Heart left ventricle (tissue), 16 donors: ENCODE measurements at regions of chr14 and their contacts with region 1.

Region 1: DNA sequence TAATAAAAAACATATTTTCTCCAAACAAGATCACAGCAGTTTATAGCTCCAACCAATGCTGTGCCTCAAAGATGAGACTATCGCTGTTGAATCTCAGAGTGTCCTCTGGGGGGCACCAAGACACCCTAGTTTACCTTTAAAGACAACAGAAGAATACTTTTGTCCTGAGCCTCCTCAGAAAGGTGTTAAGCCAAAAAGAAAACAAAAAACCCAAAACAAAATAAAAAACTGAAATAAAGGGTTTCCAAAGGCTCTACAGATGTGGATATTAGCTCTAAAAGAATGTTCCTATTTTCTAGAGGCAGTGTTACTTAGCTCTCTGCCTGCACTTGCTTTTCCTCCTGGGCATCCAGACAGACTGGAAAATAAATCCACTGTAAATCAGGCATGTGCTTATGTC is 86.9 kb upstream of the TTC7B start:
- DNase-seq: peak in 4 of 5 donors; percentile 30 to 50 (median 40)
- ATAC-seq: peak; percentile 75 to 88 (median 82)
- H3K4me3 ChIP-seq: no peak overlapping the region
- H3K27ac ChIP-seq: no peak overlapping the region
- H3K4me1 ChIP-seq: no peaks in the 10 kb centered on the region
- H3K27me3 ChIP-seq: no peaks in the 10 kb centered on the region
- CTCF ChIP-seq: peak; percentile 54 to 82 (median 70)
- POLR2A ChIP-seq: no peak

Region 2: GRCh38 chr14:90295870-90296516 is 607.1 kb before region 1 on chr14:
- intact Hi-C with region 1: loop called in 4 of 10 experiments (anchors 10 kb)
- DNase-seq: no peak
- ATAC-seq: no peak
- H3K4me3 ChIP-seq: no peak overlapping the region
- H3K27ac ChIP-seq: peak overlapping the region in 1 of 12 donors; percentile 77
- H3K4me1 ChIP-seq: peaks cover 0 to 36% (median under 1%) of the 10 kb centered on the region in 12 donors
- H3K27me3 ChIP-seq: no peaks in the 10 kb centered on the region
- CTCF ChIP-seq: no peak
- POLR2A ChIP-seq: no peak

Region 3: DNA sequence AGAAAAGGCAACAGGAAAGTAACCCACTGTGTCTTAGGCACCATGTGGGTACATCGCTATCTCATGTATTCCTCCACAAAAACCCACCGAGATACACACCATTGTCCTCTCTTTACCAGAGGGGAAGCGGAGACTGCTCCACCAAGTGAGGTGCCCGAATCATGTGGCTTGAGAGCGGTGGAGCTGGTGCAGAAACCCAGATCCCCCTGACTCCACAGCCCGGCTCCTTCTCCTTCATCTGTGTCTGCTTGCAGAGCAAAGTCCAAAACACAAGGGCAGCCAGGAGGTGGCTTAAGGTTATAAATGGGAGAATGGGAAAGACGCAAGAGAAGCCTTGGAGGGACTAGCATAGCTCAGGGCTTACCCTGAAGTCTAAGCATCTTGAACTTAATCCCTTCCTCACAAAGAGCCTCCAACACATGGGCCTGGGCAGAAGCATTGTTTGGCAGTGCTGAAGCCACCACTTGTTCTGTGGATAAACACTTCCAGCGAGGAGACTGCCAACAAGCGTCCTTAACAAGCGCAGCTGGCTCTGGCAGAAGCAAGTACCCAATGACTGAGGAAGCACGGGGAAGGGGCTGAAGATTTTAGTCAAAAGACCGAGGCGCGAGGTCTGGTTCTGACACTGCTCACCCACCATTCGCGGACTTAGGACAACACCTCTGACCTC is 169.8 kb before region 1 on chr14:
- intact Hi-C with region 1: no loop called
- DNase-seq: peak in 1 of 5 donors; percentile 43
- ATAC-seq: peak; percentile 69 to 83 (median 80)
- H3K4me3 ChIP-seq: no peak overlapping the region
- H3K27ac ChIP-seq: peak overlapping the region in 1 of 12 donors; percentile 2
- H3K4me1 ChIP-seq: peaks cover 0 to 20% (median 0%) of the 10 kb centered on the region in 12 donors
- H3K27me3 ChIP-seq: no peaks in the 10 kb centered on the region
- CTCF ChIP-seq: no peak
- POLR2A ChIP-seq: no peak

Region 4: DNA sequence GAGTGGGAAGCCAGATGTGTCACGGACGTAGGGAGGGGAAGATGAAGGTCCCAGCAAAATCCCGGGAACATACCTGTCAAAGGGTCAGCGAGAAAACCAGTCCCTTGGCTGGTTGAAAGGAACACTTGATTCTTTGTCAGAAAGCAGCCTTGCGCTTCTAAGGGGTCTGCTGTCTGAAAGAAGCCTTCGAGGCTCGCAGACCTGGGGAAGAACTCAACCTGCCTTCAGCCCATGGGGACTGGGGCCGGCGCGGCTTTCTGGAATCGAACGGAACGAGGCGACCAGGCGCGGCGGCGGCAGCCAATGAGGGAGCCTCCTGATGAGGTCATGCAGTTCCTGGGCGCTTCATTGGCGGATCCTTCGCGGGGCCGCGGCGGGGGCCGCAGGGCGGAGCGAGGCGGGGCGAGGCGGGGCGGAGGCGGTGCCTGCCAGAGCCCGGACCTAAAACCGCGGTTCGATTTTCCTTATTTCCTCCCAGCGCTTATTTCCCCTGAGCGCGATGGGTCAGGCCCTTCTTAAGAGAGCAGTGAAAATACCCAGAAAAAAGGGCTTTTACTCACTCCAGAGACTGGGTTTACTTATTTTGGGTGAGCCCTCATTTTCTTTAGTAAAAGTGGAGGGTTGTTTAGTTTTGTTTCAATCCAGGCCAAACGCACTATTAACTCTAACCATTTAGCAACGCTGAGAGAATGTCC is 75.0 kb before region 1 on chr14:
- intact Hi-C with region 1: loop called in 1 of 10 experiments (anchors 2 kb)
- DNase-seq: peak; percentile 95 to 97 (median 96)
- ATAC-seq: peak; percentile 98 to 100 (median 99)
- H3K4me3 ChIP-seq: peak overlapping the region in 11 of 12 donors; percentile 3 to 57 (median 47)
- H3K27ac ChIP-seq: peak overlapping the region; percentile 1 to 95 (median 77)
- H3K4me1 ChIP-seq: peaks cover 0 to 17% (median 14%) of the 10 kb centered on the region in 12 donors
- H3K27me3 ChIP-seq: no peaks in the 10 kb centered on the region
- CTCF ChIP-seq: no peak
- POLR2A ChIP-seq: peak in 1 of 2 donors; percentile 47

Region 5: DNA sequence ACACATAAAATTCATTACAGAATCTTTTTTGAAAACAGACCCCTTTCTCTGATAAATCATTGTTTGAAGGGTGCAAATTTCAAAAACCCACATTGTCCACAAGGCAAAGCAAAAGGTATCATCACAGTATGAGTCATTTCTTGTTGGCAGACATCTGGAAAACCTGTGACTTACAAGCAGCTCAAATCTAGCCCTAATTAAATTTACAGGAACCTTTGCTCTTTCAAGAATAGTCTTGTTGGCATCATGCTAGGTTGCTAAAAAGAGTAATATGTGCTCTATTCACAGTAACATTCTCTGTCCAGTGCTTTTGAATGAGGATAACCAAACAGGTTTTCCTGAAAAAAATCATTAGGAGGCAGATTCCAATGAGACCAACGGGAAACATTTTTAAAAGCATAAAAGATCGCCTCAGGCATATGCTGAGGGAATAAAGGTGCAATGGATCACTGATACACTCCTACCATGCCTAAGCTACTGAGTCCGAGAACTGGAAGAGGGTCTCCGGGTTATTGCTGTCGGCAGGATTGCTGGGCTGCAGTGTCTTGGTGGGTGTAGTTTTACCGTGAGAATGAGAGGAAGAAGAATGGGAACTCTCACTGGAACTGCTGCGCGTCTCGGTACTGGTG is 31.4 kb before region 1 on chr14:
- intact Hi-C with region 1: no loop called
- DNase-seq: no peak
- ATAC-seq: peak in 3 of 4 donors; percentile 20 to 72 (median 47)
- H3K4me3 ChIP-seq: no peak overlapping the region
- H3K27ac ChIP-seq: peak overlapping the region in 3 of 12 donors; percentile 4 to 50 (median 45)
- H3K4me1 ChIP-seq: peaks cover 0 to 41% (median 10%) of the 10 kb centered on the region in 12 donors
- H3K27me3 ChIP-seq: no peaks in the 10 kb centered on the region
- CTCF ChIP-seq: no peak
- POLR2A ChIP-seq: no peak

Region 6: GRCh38 chr14:91047174-91047753 is 144.2 kb after region 1 on chr14:
- intact Hi-C with region 1: loop called in 1 of 10 experiments (anchors 10 kb)
- DNase-seq: no peak
- ATAC-seq: no peak
- H3K4me3 ChIP-seq: no peak overlapping the region
- H3K27ac ChIP-seq: no peak overlapping the region
- H3K4me1 ChIP-seq: peaks cover 0 to 5% (median 0%) of the 10 kb centered on the region in 12 donors
- H3K27me3 ChIP-seq: no peaks in the 10 kb centered on the region
- CTCF ChIP-seq: no peak
- POLR2A ChIP-seq: no peak

Region 7: GRCh38 chr14:91060351-91061055 is 157.4 kb after region 1 on chr14 and contains the start of gene RPS6KA5:
- intact Hi-C with region 1: loop called in 2 of 10 experiments (anchors 5 to 10 kb)
- DNase-seq: peak; percentile 100
- ATAC-seq: peak; percentile 97 to 98 (median 98)
- H3K4me3 ChIP-seq: peak within 1 kb of the TSS; percentile 68 to 98 (median 94)
- H3K27ac ChIP-seq: peak within 1 kb of the TSS; percentile 84 to 99 (median 95)
- H3K4me1 ChIP-seq: peaks cover 0 to 32% (median 6%) of the 10 kb centered on the region in 12 donors
- H3K27me3 ChIP-seq: no peaks in the 10 kb centered on the region
- CTCF ChIP-seq: peak in 7 of 12 donors; percentile 3 to 37 (median 24)
- POLR2A ChIP-seq: peak in 1 of 2 donors; percentile 84
- total RNA-seq, gene RPS6KA5: 6.5 to 13.3 (median 8.7) TPM

Region 8: DNA sequence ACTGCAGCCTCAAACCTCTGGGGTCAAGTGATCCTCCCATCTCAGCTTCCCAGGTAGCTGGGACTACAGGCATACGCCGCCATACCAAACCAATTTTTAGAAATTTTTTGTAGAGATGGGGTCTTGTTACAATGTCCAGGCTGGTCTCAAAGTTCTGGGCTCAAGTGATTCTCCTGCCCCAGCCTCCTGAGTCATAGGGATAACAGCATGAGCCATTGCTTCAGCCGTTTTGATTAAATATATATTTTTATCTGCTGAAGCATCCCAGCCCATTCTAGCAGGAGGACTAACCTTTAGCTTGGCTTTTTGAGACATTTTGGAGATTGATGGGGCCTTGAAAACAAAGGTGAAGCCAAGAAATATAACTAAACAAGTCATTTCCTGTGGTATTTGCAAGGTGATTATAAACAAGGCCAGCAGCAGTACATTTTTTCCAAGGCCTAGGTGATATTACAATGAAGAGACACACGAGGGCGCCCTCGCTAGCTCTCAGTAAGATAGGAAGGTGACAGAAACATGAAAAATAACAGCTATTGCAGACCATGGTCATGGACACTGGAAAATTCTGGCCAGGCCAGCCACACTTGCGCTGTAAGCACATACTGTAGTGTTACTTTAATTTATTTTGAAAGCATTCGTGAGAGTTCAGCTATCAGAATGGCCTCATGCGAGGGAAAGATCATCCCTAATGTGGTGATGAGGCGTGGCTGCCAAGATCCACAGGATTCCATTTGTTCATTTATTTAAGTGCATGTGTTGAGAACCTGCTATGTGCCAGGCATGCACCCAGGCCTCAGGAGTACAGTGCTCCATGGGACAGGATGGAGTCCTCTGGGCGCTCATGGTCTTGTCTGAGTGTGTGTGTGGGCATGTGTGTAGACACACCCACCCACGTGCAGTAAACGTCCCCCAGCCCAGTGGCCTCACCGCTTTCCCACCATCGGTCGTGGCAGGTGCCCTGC is 274.3 kb after region 1 on chr14:
- intact Hi-C with region 1: loop called (anchors 1 to 5 kb)
- DNase-seq: peak in 4 of 5 donors; percentile 32 to 49 (median 46)
- ATAC-seq: peak; percentile 31 to 67 (median 50)
- H3K4me3 ChIP-seq: no peak overlapping the region
- H3K27ac ChIP-seq: peak overlapping the region in 3 of 12 donors; percentile 12 to 37 (median 26)
- H3K4me1 ChIP-seq: peaks cover 0 to 14% (median 6%) of the 10 kb centered on the region in 12 donors
- H3K27me3 ChIP-seq: no peaks in the 10 kb centered on the region
- CTCF ChIP-seq: peak; percentile 58 to 80 (median 73)
- POLR2A ChIP-seq: no peak

Region 9: DNA sequence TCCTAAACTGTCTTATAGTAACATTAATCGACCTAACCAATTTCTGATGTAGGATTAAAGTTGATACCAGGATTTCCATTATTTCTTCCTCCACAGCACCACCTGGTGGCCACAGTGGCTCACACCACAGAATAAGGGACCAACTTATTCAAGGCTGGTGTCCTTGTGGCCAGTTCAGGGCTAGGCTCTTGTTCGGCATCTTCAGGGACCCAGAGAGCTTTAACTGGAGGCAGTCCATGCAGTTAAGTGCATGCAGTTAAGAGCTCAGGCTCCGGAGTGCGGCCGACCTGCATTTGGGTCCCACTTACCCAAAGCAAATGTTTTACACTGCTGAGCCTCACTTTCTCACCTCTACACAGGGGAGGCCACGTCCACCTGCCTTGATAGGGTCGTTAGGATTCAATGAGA is 383.4 kb after region 1 on chr14:
- intact Hi-C with region 1: loop called in 9 of 10 experiments (anchors 5 to 10 kb)
- DNase-seq: peak; percentile 50 to 82 (median 72)
- ATAC-seq: peak in 3 of 4 donors; percentile 67 to 75 (median 68)
- H3K4me3 ChIP-seq: no peak overlapping the region
- H3K27ac ChIP-seq: no peak overlapping the region
- H3K4me1 ChIP-seq: peaks cover 0 to 21% (median 6%) of the 10 kb centered on the region in 12 donors
- H3K27me3 ChIP-seq: no peaks in the 10 kb centered on the region
- CTCF ChIP-seq: peak; percentile 81 to 95 (median 88)
- POLR2A ChIP-seq: no peak